ENCODE measurements at regions of chr20 and their contacts with region 1.

Region 1: DNA sequence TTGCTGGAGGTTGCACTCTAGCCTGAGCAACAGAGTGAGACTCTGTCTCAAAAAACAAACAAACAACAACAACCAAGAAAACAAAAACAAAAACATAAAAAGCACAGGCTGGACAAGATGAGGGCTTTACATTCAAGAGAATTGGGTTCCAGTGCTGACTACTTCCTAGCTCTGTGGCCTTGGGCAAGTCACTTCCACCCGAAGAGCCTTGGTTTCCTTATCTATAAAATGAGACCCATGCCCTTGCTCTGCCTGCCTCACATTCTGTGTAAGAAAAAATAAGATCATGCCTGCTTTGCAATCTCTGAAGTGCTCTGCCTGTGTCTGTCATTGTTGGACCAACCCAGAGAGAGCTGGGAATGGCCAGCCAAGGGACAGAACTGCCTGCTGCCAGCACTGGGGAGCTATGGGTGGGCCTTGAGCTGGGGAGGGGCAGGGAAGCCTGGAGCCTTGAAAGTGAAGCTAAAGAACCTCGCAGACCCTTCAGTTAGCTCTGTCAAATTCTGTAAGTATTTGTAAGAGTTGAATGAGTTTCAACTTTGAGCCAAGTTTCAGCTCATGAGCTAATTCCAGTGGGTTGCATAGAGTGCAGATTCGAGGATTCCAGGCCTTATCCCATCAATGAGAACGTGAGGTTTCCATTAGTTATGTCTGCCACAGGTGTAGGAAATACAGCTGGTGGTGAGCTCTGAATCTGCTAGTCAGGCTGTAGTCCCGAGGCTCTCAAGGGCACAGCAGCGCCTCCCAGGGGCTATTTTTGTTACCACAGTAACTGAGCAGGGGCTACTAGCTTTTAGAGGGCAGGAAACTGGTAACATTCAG is 93.2 kb downstream of the DLGAP4 start:
- DNase-seq: peak; percentile 68
- H3K4me3 Mint-ChIP-seq: no peak overlapping the region
- H3K27ac Mint-ChIP-seq: no peak overlapping the region
- H3K4me1 Mint-ChIP-seq: peaks cover 2% of the 10 kb centered on the region
- H3K27me3 Mint-ChIP-seq: peaks cover 19% of the 10 kb centered on the region

Region 2: DNA sequence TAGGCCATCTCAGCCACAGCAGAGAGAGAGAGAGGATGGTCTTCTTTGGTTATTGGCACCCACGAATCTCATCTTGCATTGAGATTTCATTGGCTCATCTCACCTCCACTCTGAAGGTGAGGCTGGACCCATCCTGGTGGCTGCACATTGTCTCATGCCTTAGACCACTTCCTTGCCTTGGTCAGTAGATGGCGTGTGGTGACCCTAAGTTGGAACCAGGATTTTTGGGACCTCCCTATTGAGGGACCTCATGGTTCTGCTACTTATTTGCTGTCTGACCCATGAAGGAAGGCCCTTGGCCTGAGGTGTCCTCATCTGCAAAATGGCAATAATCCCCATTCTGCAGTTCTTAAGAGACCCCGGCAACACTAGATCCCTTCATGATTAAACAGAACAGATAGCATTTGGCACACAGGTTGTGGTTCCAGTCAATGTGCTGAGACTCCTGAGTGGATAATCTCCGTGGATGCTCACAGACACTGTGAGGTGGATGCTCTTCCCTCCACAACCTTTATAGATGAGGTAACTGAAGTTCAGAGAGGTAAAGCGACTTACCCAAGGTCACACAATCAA is 184.6 kb before region 1 on chr20:
- CTCF ChIA-PET with region 1: interaction called, 7 read pairs
- POLR2A ChIA-PET with region 1: no interaction called
- intact Hi-C with region 1: loop called (anchors 2 kb)
- DNase-seq: peak; percentile 15
- H3K4me3 Mint-ChIP-seq: no peak overlapping the region
- H3K27ac Mint-ChIP-seq: no peak overlapping the region
- H3K4me1 Mint-ChIP-seq: no peaks in the 10 kb centered on the region
- H3K27me3 Mint-ChIP-seq: no peaks in the 10 kb centered on the region

Region 3: DNA sequence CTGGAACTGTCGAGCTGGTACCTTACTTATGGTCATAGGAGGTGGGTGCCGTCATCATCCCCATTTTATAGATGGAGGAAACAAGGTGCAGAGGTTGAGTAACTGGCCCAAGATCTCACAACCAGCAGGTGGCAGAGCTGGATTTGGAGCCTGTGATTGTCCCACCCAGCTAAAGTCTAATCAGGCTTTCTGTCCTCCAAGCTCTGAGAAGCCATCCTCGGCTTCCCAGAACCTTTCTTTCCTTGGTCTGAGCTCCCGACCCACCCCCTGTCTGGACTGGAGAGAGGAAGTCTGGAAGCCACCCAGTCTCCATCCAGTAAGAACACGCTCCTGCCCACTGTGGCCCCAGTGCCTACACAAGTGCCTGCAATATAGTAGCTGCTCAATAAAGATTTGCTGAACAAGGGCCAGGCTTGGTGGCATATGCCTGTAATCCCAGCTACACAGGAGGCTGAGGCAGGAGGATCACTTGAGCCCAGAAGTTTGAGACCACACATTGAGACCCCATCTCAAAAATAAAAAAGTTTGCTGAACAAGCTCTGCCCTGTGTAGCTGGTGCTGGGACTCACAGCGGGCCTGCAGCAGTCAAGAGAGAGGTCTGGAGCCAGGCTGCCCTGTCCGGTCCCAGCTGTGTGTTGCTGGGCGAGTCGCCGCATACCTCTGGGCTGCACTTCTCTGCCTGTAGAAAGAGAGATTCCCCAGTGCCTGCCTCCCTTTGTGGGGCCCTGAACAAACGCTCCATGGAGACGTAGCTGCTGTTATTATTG is 125.8 kb before region 1 on chr20:
- CTCF ChIA-PET with region 1: interaction called, 18 read pairs
- POLR2A ChIA-PET with region 1: no interaction called
- intact Hi-C with region 1: no loop called
- DNase-seq: peak; percentile 18
- H3K4me3 Mint-ChIP-seq: no peak overlapping the region
- H3K27ac Mint-ChIP-seq: no peak overlapping the region
- H3K4me1 Mint-ChIP-seq: no peaks in the 10 kb centered on the region
- H3K27me3 Mint-ChIP-seq: peaks cover 8% of the 10 kb centered on the region

Region 4: GRCh38 chr20:36418711-36419110 is 19.4 kb after region 1 on chr20:
- CTCF ChIA-PET with region 1: no interaction called
- POLR2A ChIA-PET with region 1: no interaction called
- intact Hi-C with region 1: no loop called
- DNase-seq: no peak
- H3K4me3 Mint-ChIP-seq: no peak overlapping the region
- H3K27ac Mint-ChIP-seq: no peak overlapping the region
- H3K4me1 Mint-ChIP-seq: no peaks in the 10 kb centered on the region
- H3K27me3 Mint-ChIP-seq: peaks cover 7% of the 10 kb centered on the region

Region 5: DNA sequence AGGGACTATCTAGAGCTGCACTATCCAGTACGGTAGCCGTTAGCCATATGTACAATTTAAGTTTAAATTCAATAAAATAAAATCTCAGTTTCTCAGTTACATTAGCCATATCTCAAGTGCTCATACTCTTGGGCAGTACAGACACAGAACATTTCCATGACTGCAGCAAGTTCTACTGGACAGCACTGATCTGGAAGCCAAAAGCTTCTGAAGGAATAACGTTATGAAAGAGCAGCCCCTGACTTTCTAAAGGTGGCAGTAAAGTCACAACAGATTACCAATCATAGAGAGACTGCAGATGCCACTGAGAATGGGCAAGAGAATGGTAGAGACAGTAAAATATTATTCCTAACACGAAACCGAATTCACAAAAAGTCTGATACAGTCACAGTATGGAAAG is 309.8 kb after region 1 on chr20:
- CTCF ChIA-PET with region 1: no interaction called
- POLR2A ChIA-PET with region 1: no interaction called
- intact Hi-C with region 1: no loop called
- DNase-seq: no peak
- H3K4me3 Mint-ChIP-seq: no peak overlapping the region
- H3K27ac Mint-ChIP-seq: no peak overlapping the region
- H3K4me1 Mint-ChIP-seq: no peaks in the 10 kb centered on the region
- H3K27me3 Mint-ChIP-seq: no peaks in the 10 kb centered on the region